ENCODE measurements at regions of chr17 and their contacts with region 1.

Region 1: DNA sequence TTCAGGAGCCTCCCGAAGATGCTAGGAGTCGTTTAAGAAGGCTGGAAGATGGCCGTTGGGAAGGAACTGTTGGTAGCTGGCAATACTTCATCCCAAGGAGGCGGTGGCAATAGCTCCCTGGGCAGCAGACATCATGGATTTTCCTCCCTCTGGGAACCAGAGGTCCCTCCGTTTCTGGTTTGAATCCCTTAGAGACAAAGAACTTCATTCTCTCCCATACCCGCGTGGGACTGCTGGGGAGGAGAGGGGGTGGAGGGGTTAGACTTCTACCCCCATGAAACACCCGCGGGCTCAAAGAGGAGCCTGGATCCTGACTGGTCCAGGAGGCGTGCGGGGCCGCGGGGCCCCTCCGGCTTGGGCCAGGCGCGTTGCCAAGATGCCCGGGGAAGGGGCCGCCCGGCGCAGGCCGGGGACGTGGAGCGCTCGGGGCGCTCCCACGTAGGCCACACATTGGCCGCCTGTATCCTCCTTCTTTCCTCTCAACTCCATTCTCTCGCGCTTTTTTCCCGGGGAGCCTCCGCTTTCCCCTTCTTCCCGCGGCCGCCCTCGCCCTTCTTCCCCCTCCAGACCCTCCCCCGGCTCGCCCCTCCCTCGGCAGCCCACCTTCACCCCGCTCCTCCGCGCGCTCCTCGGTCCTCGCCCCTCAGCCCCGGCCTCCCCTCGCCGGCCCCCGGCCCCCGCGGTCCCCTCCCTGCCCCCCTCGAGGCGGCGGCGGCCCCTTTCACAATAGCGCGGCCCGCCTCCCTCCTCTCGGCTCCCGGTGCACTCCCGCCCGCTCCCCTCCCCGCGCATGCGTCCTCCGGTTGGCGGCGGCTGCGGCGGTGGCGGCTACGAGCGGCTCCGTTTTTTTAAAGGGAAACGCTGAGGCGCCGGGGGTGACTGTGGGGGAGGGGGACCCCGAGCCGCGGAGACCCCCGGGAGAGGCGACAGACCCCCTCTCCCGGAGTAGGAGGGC is at the start of gene MSL1:
- DNase-seq: peak; percentile 86
- ATAC-seq: peak; percentile 72
- H3K4me3 Mint-ChIP-seq: peak within 1 kb of the TSS; percentile 84
- H3K27ac Mint-ChIP-seq: peak within 1 kb of the TSS; percentile 83
- H3K4me1 Mint-ChIP-seq: peaks cover 35% of the 10 kb centered on the region
- H3K27me3 Mint-ChIP-seq: no peaks in the 10 kb centered on the region
- total RNA-seq, gene MSL1: 80.5 to 83.2 TPM

Region 2: GRCh38 chr17:40134184-40134583 is 12.7 kb after region 1 on chr17:
- CTCF ChIA-PET with region 1: interaction called, 23 read pairs
- POLR2A ChIA-PET with region 1: interaction called, 63 read pairs
- DNase-seq: no peak
- ATAC-seq: no peak
- H3K4me3 Mint-ChIP-seq: no peak overlapping the region
- H3K27ac Mint-ChIP-seq: no peak overlapping the region
- H3K4me1 Mint-ChIP-seq: peaks cover 16% of the 10 kb centered on the region
- H3K27me3 Mint-ChIP-seq: no peaks in the 10 kb centered on the region

Region 3: DNA sequence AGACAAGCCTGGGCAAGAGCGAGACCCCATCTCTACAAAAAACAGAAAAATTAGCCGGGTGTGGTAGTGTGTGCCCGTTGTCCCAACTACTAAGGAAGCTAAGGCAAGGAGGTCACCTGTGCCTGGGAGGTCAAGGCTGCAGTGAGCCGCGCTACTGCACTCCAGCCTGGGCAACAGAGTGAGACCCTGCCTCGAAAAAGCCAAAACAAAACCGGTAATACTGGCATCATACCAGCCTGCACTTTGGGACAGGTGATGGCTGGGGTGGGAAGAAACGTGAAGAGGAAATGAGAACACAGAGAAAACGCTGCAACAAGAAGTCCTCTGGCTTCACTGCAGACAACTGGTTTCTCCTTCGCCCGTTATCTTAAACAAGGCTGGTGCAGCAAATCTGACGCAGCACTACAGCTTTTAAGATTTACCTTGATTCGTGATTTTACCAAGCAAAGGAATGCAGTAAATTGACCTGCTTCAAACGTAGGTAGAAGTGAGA is 18.2 kb after region 1 on chr17:
- CTCF ChIA-PET with region 1: interaction called, 23 read pairs
- POLR2A ChIA-PET with region 1: interaction called, 63 read pairs
- DNase-seq: no peak
- ATAC-seq: no peak
- H3K4me3 Mint-ChIP-seq: peak overlapping the region; percentile 87
- H3K27ac Mint-ChIP-seq: peak overlapping the region; percentile 94
- H3K4me1 Mint-ChIP-seq: peaks cover 36% of the 10 kb centered on the region
- H3K27me3 Mint-ChIP-seq: no peaks in the 10 kb centered on the region

Measured in activated CD8-positive, alpha-beta T cell treated with anti-CD3 and anti-CD28 coated beads, Interleukin-2, amount 10 ng/mL, durations not matched to agents 7 days and 5 days (primary cell).